ENCODE measurements at regions of chr7 and their contacts with region 1.

Region 1: GRCh38 chr7:30740424-30741181 is 11.3 kb upstream of the INMT start:
- DNase-seq: peak; percentile 85
- H3K4me3 Mint-ChIP-seq: no peak overlapping the region
- H3K27ac Mint-ChIP-seq: no peak overlapping the region
- H3K4me1 Mint-ChIP-seq: peaks cover 29% of the 10 kb centered on the region
- H3K27me3 Mint-ChIP-seq: no peaks in the 10 kb centered on the region

Region 2: DNA sequence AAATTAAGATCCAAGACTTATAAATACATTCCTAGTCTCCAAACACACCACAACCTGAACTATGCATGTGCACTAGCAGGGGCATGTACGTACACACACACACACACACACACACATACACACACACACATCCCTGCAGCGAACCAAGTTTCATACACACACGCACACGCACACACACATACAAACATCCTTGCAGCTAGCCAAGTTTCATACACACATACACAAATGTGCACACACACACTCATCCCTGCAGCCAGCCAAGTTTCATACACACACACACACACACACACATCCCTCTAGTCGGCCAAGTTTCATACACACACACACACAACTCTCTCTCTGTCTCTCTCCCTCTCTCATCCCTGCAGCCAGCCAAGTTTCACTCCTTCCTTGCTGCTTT is 1017.0 kb before region 1 on chr7:
- CTCF ChIA-PET with region 1: no interaction called
- intact Hi-C with region 1: no loop called
- DNase-seq: no peak
- H3K4me3 Mint-ChIP-seq: no peak overlapping the region
- H3K27ac Mint-ChIP-seq: no peak overlapping the region
- H3K4me1 Mint-ChIP-seq: no peaks in the 10 kb centered on the region
- H3K27me3 Mint-ChIP-seq: peaks cover 3% of the 10 kb centered on the region

Region 3: GRCh38 chr7:30026229-30027064 is 714.2 kb before region 1 on chr7 and contains the start of gene FKBP14:
- CTCF ChIA-PET with region 1: no interaction called
- intact Hi-C with region 1: loop called (anchors 1 kb)
- DNase-seq: peak; percentile 96
- H3K4me3 Mint-ChIP-seq: no peak within 1 kb of the TSS
- H3K27ac Mint-ChIP-seq: peak within 1 kb of the TSS; percentile 75
- H3K4me1 Mint-ChIP-seq: peaks cover 27% of the 10 kb centered on the region
- H3K27me3 Mint-ChIP-seq: no peaks in the 10 kb centered on the region
- total RNA-seq, gene FKBP14: 4.7 to 5.2 TPM

Region 4: DNA sequence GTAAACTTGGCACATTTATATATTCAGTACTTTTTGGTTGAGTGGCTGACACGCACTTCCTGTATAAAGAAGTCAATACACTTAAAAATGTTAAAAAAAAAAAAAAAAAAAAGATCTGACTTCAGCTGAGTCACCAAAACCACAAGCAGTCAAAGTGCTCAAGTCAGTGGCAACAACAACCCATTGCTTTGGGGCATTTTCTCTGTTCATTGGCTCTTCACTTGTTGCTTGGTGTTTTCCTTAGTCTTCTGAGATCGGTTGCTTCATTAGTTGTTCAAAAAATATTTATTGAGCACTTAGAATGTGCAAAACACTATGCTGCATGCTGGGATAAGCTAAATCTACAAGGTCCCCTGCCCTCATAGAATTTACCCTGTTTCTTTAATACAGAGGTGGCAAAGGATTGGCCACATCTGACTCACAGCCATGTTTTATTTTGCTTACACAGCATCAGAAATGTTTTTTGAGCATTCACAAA is 392.5 kb before region 1 on chr7:
- CTCF ChIA-PET with region 1: no interaction called
- intact Hi-C with region 1: loop called (anchors 1 kb)
- DNase-seq: peak; percentile 67
- H3K4me3 Mint-ChIP-seq: peak overlapping the region; percentile 50
- H3K27ac Mint-ChIP-seq: peak overlapping the region; percentile 86
- H3K4me1 Mint-ChIP-seq: peaks cover 52% of the 10 kb centered on the region
- H3K27me3 Mint-ChIP-seq: no peaks in the 10 kb centered on the region

Region 5: DNA sequence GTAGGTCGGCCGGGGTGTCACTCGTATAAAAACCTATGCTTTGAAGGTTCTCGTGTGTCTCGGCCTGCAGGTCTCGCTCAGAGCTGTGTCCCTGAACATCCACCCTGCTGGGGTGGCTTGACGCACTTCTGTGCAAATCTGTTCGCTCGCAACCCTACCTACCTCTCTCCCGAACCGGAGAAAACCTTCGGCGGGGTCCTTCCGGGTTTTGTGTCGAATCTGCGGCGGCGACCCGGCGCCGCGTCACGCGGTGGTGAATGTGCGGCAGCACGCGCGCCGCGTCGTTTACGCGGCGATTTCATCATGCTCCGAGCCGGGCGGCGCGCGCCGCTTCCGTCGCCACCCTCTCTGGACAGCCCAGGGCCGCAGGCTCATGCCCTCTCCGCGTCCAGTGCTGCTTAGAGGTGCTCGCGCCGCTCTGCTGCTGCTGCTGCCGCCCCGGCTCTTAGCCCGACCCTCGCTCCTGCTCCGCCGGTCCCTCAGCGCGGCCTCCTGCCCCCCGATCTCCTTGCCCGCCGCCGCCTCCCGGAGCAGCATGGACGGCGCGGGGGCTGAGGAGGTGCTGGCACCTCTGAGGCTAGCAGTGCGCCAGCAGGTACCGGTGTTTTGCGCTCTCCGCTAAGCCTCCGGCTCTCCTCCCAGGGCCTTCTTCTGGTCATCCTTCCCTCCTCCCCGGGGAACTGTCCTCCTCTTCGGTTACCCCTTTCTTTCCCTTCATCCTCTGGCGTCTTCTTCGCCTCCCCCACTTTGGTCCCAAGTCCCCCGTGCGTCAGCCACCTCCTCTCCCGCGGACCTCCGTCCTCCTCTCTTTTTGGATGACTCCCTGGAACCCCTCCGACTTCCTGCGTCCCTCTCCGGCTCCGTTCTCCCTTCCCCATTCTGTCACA is 145.8 kb before region 1 on chr7 and contains the start of gene GARS1:
- CTCF ChIA-PET with region 1: no interaction called
- intact Hi-C with region 1: loop called (anchors 1 kb)
- DNase-seq: peak; percentile 88
- H3K4me3 Mint-ChIP-seq: peak within 1 kb of the TSS; percentile 96
- H3K27ac Mint-ChIP-seq: peak within 1 kb of the TSS; percentile 97
- H3K4me1 Mint-ChIP-seq: peaks cover 49% of the 10 kb centered on the region
- H3K27me3 Mint-ChIP-seq: no peaks in the 10 kb centered on the region
- total RNA-seq, gene GARS1: 367 to 385 TPM

Region 6: GRCh38 chr7:30682212-30683083 is 58.2 kb before region 1 on chr7 and contains the start of gene CRHR2:
- CTCF ChIA-PET with region 1: interaction called, 67 read pairs
- intact Hi-C with region 1: loop called (anchors 1 kb)
- DNase-seq: peak; percentile 49
- H3K4me3 Mint-ChIP-seq: peak within 1 kb of the TSS; percentile 57
- H3K27ac Mint-ChIP-seq: no peak within 1 kb of the TSS
- H3K4me1 Mint-ChIP-seq: peaks cover 5% of the 10 kb centered on the region
- H3K27me3 Mint-ChIP-seq: peaks cover 55% of the 10 kb centered on the region
- total RNA-seq, gene CRHR2: not detected

Region 7: GRCh38 chr7:30727061-30727945 is 13.3 kb before region 1 on chr7:
- CTCF ChIA-PET with region 1: interaction called, 56 read pairs
- intact Hi-C with region 1: loop called (anchors 1 kb)
- DNase-seq: peak; percentile 75
- H3K4me3 Mint-ChIP-seq: peak overlapping the region; percentile 77
- H3K27ac Mint-ChIP-seq: peak overlapping the region; percentile 89
- H3K4me1 Mint-ChIP-seq: peaks cover 54% of the 10 kb centered on the region
- H3K27me3 Mint-ChIP-seq: no peaks in the 10 kb centered on the region

Region 8: GRCh38 chr7:30974605-30975255 is 234.1 kb after region 1 on chr7:
- CTCF ChIA-PET with region 1: interaction called, 3 read pairs
- intact Hi-C with region 1: loop called (anchors 1 kb)
- DNase-seq: peak; percentile 84
- H3K4me3 Mint-ChIP-seq: no peak overlapping the region
- H3K27ac Mint-ChIP-seq: no peak overlapping the region
- H3K4me1 Mint-ChIP-seq: no peaks in the 10 kb centered on the region
- H3K27me3 Mint-ChIP-seq: peaks cover 27% of the 10 kb centered on the region